Thyroid gland (tissue), 4 donors: ENCODE measurements at regions of chr10 and their contacts with region 1.

Region 1: DNA sequence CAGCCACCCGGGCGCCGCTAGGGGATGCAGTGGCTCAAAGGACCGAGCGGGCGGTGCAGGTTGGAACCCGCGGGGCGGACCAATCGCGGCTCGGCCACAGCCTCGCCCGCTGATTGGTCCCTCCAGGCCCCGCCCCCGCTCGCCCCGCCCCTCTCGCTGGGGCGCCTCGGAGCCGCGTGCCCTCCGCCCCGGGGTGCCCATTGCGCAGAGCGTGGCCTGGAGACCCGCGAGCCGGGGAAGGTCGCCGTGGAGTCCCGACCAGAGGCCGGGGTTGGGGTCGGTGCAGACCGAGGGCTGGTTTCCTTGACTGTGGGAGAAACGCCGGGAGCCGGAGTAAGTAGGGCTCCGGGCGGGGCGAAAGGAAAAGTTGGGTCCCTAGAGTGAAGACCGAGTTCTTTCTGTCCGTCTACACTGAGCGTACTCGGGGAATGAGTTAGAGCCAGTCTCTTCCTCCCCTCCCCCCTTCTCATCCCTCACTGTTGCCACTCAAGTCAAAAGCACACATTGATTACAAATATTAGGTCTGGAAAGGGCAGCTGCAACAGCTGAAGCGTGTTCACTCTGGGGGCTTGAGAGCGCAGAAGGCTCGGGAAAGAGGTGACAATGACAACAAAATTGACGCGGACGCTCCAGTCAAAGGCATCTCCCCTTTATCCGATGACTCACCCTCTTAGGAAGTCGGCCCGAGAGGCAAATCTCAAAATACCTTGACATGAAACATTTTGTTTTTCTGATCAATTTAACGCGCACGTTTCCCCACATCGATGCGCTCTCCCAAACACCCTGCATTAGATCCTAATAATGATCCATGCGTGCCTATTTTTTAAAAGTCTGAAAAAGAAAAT is 820 bp upstream of the GATA3 start:
- DNase-seq: peak; percentile 93 to 95
- H3K4me3 ChIP-seq: peak overlapping the region; percentile 50 to 59 (median 53)
- H3K27ac ChIP-seq: peak overlapping the region in 2 of 3 donors; percentile 32 to 65
- H3K4me1 ChIP-seq: peaks cover 32 to 47% of the 10 kb centered on the region in 2 donors
- H3K27me3 ChIP-seq: peaks cover 39% of the 10 kb centered on the region
- CTCF ChIP-seq: peak in 5 of 6 experiments; percentile 80 to 97 (median 93)
- POLR2A ChIP-seq: peak in 1 of 2 donors; percentile 50

Region 2: GRCh38 chr10:8229153-8229552 is 175.5 kb after region 1 on chr10:
- intact Hi-C with region 1: no loop called
- DNase-seq: no peak
- H3K4me3 ChIP-seq: no peak overlapping the region
- H3K27ac ChIP-seq: no peak overlapping the region
- H3K4me1 ChIP-seq: no peaks in the 10 kb centered on the region
- H3K27me3 ChIP-seq: no peaks in the 10 kb centered on the region
- CTCF ChIP-seq: no peak
- POLR2A ChIP-seq: no peak

Region 3: DNA sequence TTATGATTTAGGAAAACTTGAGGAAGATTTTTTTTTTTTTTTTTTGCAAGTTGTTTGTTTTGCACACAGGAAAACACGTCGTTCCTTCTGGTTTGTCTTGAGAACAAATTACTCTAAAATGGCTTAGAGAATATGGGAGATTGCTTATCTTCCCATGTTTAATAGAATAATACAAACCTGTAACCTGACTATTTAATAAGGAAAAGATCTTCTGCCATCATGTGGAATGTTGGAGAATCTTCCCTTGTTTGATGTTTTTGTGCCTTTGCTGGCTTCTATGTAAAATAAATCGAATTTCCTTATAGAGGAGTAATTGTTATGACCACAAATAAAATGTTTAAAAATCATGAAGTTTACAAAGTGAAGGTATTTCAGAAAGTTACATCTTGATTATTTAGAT is 819.6 kb after region 1 on chr10:
- intact Hi-C with region 1: loop called (anchors 10 kb)
- DNase-seq: no peak
- H3K4me3 ChIP-seq: no peak overlapping the region
- H3K27ac ChIP-seq: no peak overlapping the region
- H3K4me1 ChIP-seq: no peaks in the 10 kb centered on the region
- H3K27me3 ChIP-seq: no peaks in the 10 kb centered on the region
- CTCF ChIP-seq: peak in 5 of 6 experiments; percentile 22 to 71 (median 54)
- POLR2A ChIP-seq: no peak